PC-3 (cell line): ENCODE measurements at regions of chr5 and their contacts with region 1.

Region 1: DNA sequence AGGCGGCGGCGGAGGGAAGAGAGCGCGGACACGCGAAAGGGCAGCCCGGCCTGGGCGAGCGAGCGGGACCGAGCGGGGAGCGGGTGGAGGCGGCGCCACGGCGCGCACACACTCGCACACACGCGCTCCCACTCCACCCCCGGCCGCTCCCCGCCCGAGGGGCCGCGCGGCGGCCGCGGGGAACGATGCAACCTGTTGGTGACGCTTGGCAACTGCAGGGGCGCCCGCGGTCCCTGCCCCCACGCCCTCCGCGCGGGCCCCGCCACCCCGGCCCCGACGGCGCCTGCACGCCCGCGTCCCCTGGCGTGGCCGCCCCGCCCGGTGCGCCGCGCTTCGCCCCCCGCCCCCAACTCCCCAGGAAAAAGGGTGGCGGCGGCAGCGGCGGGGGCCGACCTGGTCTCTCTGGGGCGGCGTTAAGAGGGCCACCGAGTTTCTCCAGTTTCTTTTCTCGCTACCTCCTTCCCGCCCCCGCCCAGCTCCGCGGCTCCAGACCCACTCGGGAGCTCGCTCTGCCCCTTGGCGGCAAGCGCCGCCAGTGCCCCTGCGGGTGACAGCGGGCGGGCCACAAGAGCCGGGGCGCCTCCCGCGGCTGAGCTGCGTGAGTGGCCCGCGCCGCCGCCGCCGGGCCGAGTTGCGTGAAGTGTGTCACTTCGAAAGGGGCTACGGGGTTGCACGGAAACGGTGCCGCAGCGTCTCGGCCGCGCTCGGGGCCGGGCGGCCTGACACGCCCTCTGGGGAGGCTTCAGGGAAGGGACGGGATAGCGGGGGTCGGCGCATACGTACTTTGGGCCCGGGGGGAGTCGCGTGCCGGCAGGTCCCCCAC is at the start of gene NR3C1:
- DNase-seq: peak; percentile 78
- ATAC-seq: peak; percentile 55
- H3K4me3 ChIP-seq: peak within 1 kb of the TSS; percentile 92
- H3K27ac ChIP-seq: peak within 1 kb of the TSS; percentile 99
- H3K4me1 ChIP-seq: peaks cover 33% of the 10 kb centered on the region
- H3K27me3 ChIP-seq: no peaks in the 10 kb centered on the region
- CTCF ChIP-seq: peak; percentile 21; the same call in 1 of the 2 replicates
- total RNA-seq, gene NR3C1: 13.0 and 14.5 TPM in 2 replicates

Region 2: DNA sequence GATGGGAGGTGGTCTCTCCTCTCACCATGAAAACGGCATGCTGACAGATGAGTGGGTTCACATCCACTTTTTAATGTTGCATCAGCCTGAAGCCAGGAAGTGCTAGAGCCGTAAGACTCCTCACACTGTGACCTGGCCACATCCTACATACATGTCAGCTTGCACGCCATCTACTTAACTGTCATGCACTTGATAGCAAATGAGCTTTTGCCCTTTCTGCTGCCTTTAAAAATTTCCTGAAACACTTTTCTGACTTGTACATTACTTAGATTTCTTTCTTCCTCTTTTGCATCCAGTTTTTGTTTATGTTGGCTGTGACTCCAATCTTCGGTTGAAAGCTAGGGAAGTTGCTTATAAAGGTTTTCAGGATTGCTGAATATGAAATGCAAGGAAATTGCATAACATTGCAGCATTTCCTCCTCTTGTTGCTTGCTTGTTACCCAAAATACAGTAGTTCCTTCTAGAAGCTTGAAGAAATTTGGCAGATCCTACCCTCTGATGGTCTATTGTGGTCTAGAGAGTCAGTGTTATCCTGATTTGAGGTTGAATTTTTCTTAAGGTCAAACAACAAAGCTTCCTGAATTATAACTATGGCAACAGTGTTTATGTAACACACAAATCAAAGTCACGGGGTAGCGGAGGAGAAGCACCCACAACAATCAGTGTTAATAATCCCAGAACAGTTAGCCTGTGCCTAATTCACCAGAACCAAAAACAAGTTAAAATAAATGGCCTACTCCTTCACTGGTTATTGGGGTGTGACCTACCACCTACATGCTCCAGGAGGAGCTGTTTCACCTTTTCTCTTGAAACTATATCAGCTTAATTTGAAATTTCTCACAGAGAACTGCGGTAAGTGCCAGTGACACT is 401.1 kb before region 1 on chr5:
- CTCF ChIA-PET with region 1: interaction called, 4 read pairs
- POLR2A ChIA-PET with region 1: no interaction called
- intact Hi-C with region 1: loop called (anchors 2 kb)
- DNase-seq: peak; percentile 47
- ATAC-seq: peak; percentile 48
- H3K4me3 ChIP-seq: no peak overlapping the region
- H3K27ac ChIP-seq: 0 out of 2 replicates have a peak overlapping the region, but pooled peaks have one; percentile 25
- H3K4me1 ChIP-seq: peaks cover 14% of the 10 kb centered on the region
- H3K27me3 ChIP-seq: no peaks in the 10 kb centered on the region
- CTCF ChIP-seq: peak; percentile 60

Region 3: DNA sequence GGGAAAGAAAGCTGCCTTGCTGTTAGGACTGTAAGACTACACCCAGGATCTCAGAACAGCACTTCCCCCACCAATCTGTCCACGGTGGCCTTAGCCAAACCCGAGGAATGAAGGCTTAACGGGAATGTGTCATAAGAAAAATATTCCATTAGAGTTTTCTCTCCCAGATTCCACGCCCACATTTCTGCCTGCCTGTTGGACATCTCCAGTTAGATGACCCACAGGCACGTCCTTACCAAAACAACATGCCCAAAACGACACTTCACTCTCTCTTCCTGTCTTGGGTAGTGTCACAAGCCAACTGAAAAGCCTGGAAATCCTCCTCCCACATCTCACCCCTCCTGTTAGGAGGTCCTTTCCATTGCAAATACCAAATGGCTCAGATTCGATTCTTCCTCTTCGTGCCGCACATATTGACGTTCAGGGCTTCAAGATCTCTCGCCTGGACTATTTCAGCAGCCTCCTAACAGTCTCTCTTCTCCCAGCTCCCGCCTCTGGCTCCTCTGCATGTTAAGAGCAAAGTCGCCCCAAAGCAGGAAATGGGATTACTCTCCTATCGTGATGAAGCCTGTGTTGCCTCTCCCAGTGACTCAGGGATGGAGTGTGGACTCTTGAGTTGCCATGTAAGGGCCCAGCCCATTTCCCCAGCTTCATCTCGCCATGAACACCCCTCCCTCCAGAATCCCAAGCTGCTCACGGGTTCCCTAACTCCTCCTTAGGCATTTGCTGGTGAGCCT is 159.6 kb before region 1 on chr5:
- CTCF ChIA-PET with region 1: interaction called, 3 read pairs
- POLR2A ChIA-PET with region 1: no interaction called
- intact Hi-C with region 1: loop called (anchors 2 kb)
- DNase-seq: peak; percentile 95
- ATAC-seq: peak; percentile 78
- H3K4me3 ChIP-seq: peak overlapping the region; percentile 52
- H3K27ac ChIP-seq: peak overlapping the region; percentile 99
- H3K4me1 ChIP-seq: peaks cover 58% of the 10 kb centered on the region
- H3K27me3 ChIP-seq: no peaks in the 10 kb centered on the region
- CTCF ChIP-seq: no peak

Region 4: GRCh38 chr5:143594913-143595841 is 191.4 kb after region 1 on chr5:
- CTCF ChIA-PET with region 1: no interaction called
- POLR2A ChIA-PET with region 1: no interaction called
- intact Hi-C with region 1: loop called (anchors 1 kb)
- DNase-seq: peak; percentile 80
- ATAC-seq: peak; percentile 89
- H3K4me3 ChIP-seq: peak overlapping the region; percentile 41; the same call in 1 of the 2 replicates
- H3K27ac ChIP-seq: peak overlapping the region; percentile 100
- H3K4me1 ChIP-seq: peaks cover 28% of the 10 kb centered on the region
- H3K27me3 ChIP-seq: no peaks in the 10 kb centered on the region
- CTCF ChIP-seq: 0 out of 2 replicates have a peak, but pooled peaks have one; percentile 13

Region 5: GRCh38 chr5:143837306-143837848 is 433.6 kb after region 1 on chr5:
- CTCF ChIA-PET with region 1: no interaction called
- POLR2A ChIA-PET with region 1: no interaction called
- intact Hi-C with region 1: no loop called
- DNase-seq: no peak
- ATAC-seq: no peak
- H3K4me3 ChIP-seq: no peak overlapping the region
- H3K27ac ChIP-seq: no peak overlapping the region
- H3K4me1 ChIP-seq: no peaks in the 10 kb centered on the region
- H3K27me3 ChIP-seq: no peaks in the 10 kb centered on the region
- CTCF ChIP-seq: no peak

Region 6: DNA sequence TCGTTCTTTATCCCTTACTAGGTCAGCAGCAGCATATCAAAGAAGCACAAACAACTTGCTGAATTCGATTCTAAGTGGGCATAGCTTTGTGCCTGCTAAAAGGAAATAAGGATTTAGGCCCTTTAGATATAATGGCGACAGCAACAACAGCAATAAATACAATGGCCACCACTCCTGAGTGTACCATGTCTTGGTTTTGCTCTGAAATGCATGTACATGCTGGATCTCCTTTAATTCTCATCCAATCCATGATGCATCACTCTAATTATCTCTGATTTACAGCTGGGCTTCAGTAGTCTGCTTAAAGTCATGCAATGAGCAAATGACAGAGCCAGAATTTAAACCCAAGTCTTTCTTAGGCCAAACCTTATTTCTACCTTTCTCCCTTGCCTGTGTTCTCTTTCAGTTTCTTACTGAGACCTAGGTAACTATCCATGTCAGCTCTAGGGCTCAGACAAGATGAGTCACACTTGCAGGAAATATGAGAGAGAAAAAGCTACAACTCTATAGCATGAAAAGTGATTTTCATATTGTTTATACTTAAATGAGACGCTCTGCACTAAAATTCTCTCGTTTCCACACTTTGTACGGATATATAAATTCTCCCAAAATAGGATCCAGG is 519.9 kb after region 1 on chr5:
- CTCF ChIA-PET with region 1: no interaction called
- POLR2A ChIA-PET with region 1: no interaction called
- intact Hi-C with region 1: loop called (anchors 5 kb)
- DNase-seq: peak; percentile 60
- ATAC-seq: peak; percentile 72
- H3K4me3 ChIP-seq: peak overlapping the region; percentile 43; the same call in 1 of the 2 replicates
- H3K27ac ChIP-seq: peak overlapping the region; percentile 95
- H3K4me1 ChIP-seq: peaks cover 53% of the 10 kb centered on the region
- H3K27me3 ChIP-seq: no peaks in the 10 kb centered on the region
- CTCF ChIP-seq: no peak

Region 7: GRCh38 chr5:144187699-144188294 is 784.0 kb after region 1 on chr5:
- CTCF ChIA-PET with region 1: no interaction called
- POLR2A ChIA-PET with region 1: no interaction called
- intact Hi-C with region 1: loop called (anchors 5 kb)
- DNase-seq: peak; percentile 79
- ATAC-seq: peak; percentile 61
- H3K4me3 ChIP-seq: no peak overlapping the region
- H3K27ac ChIP-seq: no peak overlapping the region
- H3K4me1 ChIP-seq: peaks cover 17% of the 10 kb centered on the region
- H3K27me3 ChIP-seq: no peaks in the 10 kb centered on the region
- CTCF ChIP-seq: no peak

Region 8: DNA sequence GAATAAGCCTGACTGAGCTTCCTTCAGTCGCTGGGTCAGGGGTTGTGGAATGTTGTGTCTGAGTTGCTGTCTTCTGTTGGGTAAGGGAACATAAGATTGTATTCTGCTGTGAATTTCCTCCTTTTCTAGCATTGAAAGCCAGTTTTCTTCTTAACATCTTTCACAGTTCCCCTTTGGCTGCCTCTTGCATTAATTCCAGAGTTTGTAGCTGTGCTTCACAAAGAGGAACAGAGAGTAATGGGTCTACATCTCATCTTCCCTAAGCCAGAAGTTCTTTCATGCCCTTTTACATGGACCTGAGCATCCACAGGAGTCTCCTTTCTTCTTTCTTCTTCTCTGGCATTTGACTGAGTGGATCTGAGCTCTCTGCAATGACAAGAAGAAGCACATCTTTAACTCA is 1453.7 kb after region 1 on chr5:
- CTCF ChIA-PET with region 1: no interaction called
- POLR2A ChIA-PET with region 1: no interaction called
- intact Hi-C with region 1: no loop called
- DNase-seq: no peak
- ATAC-seq: no peak
- H3K4me3 ChIP-seq: no peak overlapping the region
- H3K27ac ChIP-seq: no peak overlapping the region
- H3K4me1 ChIP-seq: no peaks in the 10 kb centered on the region
- H3K27me3 ChIP-seq: no peaks in the 10 kb centered on the region
- CTCF ChIP-seq: no peak